Gastrocnemius medialis (tissue), 4 donors: ENCODE measurements at regions of chr1 and their contacts with region 1.

Region 1: DNA sequence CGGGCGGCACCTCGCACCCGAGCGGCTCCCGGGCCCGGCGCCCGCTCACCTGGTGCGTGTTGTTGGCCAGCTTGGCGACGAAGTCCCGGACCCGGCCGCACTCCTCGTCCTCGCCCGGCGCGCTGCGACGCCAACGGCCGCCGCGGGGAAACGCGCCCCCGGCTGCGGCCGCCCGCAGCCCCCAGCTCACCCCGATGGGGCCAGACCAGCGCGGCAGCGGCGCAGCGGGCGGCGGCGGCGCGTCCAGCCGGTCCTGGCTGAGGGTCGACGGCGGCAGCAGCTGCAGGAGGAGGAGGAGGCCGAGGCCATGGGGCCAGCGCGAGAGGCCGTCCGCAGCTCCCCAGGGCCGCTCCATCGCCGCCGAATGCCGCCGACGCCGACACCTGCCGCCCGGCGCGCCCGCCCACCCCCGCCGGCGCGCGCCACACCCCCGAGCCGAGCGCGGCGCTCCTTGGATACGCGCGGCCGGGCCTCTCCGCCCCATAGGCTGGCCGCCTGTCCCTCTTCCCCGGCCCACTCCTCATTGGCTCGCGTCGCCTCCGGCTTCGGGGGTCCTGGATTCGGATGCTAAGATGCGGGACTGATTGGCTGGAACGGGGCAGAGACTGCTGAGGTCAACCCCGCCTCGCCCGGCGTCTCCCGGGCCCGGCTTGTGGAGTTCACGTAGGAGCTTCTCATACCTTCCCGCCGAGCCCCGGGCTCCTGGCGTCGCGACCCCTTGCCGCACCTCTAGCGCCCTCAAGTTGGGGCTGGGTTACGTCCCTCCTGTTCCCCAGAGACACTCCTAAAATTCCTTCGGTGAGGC is at the start of gene SORT1:
- DNase-seq: peak; percentile 70 to 85
- ATAC-seq: peak; percentile 42 to 55
- H3K4me3 ChIP-seq: peak within 1 kb of the TSS; percentile 60 to 75 (median 68)
- H3K27ac ChIP-seq: peak within 1 kb of the TSS; percentile 83 to 97 (median 90)
- H3K4me1 ChIP-seq: peaks cover 48 to 74% of the 10 kb centered on the region in 2 donors
- H3K27me3 ChIP-seq: no peaks in the 10 kb centered on the region
- CTCF ChIP-seq: peak in 3 of 5 experiments; percentile 11 to 34 (median 34)
- POLR2A ChIP-seq: peak; percentile 95 to 96
- total RNA-seq, gene SORT1: 93.7 to 226 (median 190) TPM

Region 2: DNA sequence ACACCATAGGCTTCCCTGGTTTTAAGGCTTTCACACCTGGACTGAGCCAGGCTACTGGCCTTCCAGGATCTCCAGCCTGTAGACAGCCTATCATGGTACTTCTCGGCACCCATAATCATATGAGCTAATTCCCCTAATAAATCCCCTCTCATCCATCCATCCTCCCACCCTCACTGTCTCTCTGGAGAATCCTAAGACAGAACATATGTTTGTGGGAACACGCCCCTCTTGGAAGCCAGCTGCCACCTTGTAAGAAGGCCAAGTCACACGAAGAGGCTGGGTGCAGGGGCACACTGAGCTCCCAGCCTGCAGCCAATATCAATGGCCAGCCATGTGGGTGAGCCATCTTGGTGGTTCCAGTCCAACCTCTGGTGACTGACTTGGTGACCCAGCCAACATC is 441.9 kb before region 1 on chr1:
- in situ Hi-C with region 1: no loop called
- intact Hi-C with region 1: no loop called
- DNase-seq: no peak
- ATAC-seq: no peak
- H3K4me3 ChIP-seq: no peak overlapping the region
- H3K27ac ChIP-seq: no peak overlapping the region
- H3K4me1 ChIP-seq: peaks cover 7 to 10% of the 10 kb centered on the region in 2 donors
- H3K27me3 ChIP-seq: no peaks in the 10 kb centered on the region
- CTCF ChIP-seq: no peak
- POLR2A ChIP-seq: no peak

Region 3: GRCh38 chr1:109213785-109214468 is 183.8 kb before region 1 on chr1 and contains the start of gene SARS1:
- in situ Hi-C with region 1: no loop called
- intact Hi-C with region 1: loop called (anchors 1 kb)
- DNase-seq: peak; percentile 79 to 83
- ATAC-seq: peak; percentile 91 to 92
- H3K4me3 ChIP-seq: peak within 1 kb of the TSS; percentile 80 to 98 (median 87)
- H3K27ac ChIP-seq: peak within 1 kb of the TSS; percentile 89 to 97 (median 94)
- H3K4me1 ChIP-seq: peaks cover 18 to 25% of the 10 kb centered on the region in 2 donors
- H3K27me3 ChIP-seq: no peaks in the 10 kb centered on the region
- CTCF ChIP-seq: no peak
- POLR2A ChIP-seq: peak; percentile 85 to 94
- total RNA-seq, gene SARS1: 97.6 to 116 (median 98.7) TPM

Region 4: GRCh38 chr1:109277434-109278204 is 120.1 kb before region 1 on chr1:
- in situ Hi-C with region 1: loop called in 3 of 4 experiments (anchors 5 to 10 kb)
- intact Hi-C with region 1: loop called (anchors 1 kb)
- DNase-seq: peak; percentile 42 to 75
- ATAC-seq: peak in 1 of 2 donors; percentile 53
- H3K4me3 ChIP-seq: no peak overlapping the region
- H3K27ac ChIP-seq: peak overlapping the region in 3 of 4 donors; percentile 21 to 62 (median 50)
- H3K4me1 ChIP-seq: peaks cover 14 to 33% of the 10 kb centered on the region in 2 donors
- H3K27me3 ChIP-seq: no peaks in the 10 kb centered on the region
- CTCF ChIP-seq: peak; percentile 85 to 93 (median 88)
- POLR2A ChIP-seq: no peak

Region 5: DNA sequence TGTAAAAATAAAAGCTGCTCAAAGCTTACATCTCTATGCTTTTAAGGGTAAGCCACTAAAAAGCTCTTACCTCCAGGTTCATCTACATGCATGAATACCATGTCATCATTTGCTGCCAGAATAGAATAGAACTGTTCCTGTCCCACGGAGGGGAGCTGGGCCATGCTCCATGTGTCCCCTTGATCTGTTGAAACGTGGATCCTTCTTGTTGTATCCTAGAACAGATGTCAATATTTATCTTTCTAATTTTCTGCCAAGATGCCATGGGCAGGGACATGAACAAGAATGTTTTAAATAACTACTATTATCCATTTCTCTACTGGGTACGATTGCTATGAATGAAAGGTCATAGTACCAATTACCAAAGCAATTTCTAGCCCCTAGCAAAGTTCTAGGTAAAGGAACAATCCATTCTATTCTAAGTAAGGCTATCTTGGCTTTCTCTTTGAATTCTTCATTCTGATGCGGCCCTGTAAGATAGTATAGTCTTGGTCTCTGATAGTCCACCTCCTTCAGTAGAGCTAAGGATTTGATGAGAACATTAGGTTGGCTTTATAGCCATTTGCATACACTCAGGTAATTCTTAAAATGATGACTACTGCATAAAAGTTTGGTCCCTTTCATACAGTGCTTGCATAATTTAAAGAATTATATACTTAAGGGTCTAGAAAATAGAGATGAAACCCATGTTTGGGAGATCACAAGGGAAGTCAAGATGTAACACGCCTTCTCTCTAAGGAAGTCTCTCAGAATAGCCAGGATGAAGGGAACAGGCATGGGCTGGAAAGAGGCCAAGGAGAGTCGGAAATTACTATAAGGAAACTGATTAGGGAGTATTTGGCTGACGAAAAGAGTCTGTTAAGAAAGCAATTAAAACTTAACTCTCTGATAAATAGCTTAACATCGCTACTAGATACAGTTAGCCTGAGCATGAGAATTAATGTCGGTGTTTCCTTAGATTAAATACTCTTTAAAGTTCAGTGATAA is 55.5 kb before region 1 on chr1:
- in situ Hi-C with region 1: loop called in 1 of 4 experiments (anchors 10 kb)
- intact Hi-C with region 1: loop called (anchors 2 kb)
- DNase-seq: no peak
- ATAC-seq: no peak
- H3K4me3 ChIP-seq: no peak overlapping the region
- H3K27ac ChIP-seq: peak overlapping the region in 2 of 4 donors; percentile 11 to 85
- H3K4me1 ChIP-seq: peaks cover 7 to 18% of the 10 kb centered on the region in 2 donors
- H3K27me3 ChIP-seq: no peaks in the 10 kb centered on the region
- CTCF ChIP-seq: no peak
- POLR2A ChIP-seq: no peak

Region 6: DNA sequence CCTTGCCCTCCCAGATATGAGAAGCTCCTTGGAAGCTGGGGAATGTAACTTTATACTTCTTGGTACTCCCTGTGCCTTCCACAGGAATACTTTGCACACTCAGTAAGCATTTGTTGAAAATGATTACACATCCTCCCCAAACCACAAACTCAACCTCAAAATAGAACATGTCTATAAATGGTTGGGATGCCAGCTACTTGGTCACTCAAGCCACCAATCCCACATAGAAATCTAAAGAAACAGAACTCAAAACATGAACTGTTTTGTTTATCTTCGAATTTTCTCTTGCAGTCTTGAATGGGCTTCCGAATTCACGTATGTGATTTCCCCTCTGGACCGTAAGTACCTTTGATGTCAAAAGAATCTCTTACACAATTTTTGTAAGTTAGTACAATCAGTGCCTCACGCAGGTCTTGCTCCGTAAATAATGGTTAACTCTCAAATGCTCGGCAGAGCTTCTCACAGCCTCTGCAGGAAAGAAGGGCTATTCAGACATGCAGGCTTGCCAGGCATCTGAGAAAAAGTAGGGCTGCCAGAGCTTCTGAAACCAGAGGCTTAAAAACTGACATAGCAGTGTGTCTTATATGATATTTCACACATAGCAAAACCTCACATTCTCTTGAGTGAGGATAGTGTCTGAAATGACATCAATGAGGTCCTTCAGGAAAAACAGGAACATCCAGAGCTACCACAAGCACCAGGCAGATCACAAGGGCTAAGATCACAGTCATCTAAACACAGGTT is 26.9 kb before region 1 on chr1:
- in situ Hi-C with region 1: no loop called
- intact Hi-C with region 1: loop called (anchors 2 kb)
- DNase-seq: peak; percentile 37 to 54
- ATAC-seq: peak; percentile 85
- H3K4me3 ChIP-seq: peak overlapping the region; percentile 18 to 45 (median 32)
- H3K27ac ChIP-seq: peak overlapping the region; percentile 92 to 97 (median 93)
- H3K4me1 ChIP-seq: peaks cover 52 to 56% of the 10 kb centered on the region in 2 donors
- H3K27me3 ChIP-seq: no peaks in the 10 kb centered on the region
- CTCF ChIP-seq: no peak
- POLR2A ChIP-seq: peak in 1 of 2 donors; percentile 48

Region 7: DNA sequence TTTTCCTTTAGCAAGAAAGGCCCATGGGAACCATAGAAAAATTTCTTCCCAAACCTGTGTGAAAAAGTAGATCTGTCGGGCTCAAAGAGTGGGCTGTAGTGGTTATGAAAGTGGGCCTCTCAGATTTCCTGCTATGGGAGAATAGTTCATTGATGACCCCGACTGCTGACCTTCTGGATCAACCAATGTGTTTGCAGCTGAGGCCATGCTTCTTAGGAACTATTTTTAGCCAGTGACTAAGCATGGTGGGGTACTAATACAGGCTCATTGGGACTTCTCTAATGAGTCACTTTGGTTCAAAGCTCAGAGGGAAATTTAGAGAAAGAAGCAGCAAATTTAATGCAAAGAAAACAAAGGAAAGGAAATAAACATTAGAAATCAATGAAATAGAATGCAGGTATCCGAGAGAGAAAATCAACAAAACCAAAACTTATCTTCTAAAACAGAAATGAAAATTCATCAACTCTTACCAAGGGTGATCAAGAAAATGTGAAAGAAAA is 41.1 kb after region 1 on chr1:
- in situ Hi-C with region 1: no loop called
- intact Hi-C with region 1: no loop called
- DNase-seq: peak in 1 of 2 donors; percentile 33
- ATAC-seq: peak; percentile 89 to 99
- H3K4me3 ChIP-seq: no peak overlapping the region
- H3K27ac ChIP-seq: peak overlapping the region; percentile 9 to 65 (median 53)
- H3K4me1 ChIP-seq: peaks cover 12% of the 10 kb centered on the region in 2 donors
- H3K27me3 ChIP-seq: peaks cover 0 to 5% (median 0%) of the 10 kb centered on the region in 3 donors
- CTCF ChIP-seq: no peak
- POLR2A ChIP-seq: no peak

Region 8: DNA sequence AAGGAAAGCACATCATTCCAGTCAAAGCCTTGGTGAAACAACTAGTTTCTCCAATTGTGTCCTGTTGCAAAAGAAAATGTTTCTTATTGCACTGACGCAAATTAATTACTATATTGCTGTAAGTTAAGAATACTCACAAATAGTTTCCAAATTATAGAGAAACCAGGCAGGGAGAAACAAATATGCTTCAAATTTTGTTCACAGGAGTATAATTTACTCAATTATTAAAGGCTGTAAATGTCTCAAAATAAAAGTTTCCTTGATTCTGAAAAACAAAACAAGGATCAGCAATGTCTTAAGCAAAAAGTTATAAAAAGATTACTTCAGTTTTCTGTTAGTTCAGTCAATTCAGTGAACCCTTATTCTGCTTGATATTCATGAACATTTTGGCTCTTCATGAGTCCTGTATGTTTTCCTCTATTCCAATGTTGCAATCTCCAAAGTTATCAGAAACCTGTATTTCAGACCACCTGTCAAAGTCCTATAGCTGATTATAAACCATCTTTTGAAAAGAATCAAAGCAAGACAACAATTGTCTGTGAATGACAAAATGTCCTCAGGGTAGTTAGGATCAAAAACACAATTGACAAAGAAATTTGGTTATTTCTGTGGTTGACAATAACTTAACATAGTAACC is 56.9 kb after region 1 on chr1:
- in situ Hi-C with region 1: no loop called
- intact Hi-C with region 1: no loop called
- DNase-seq: no peak
- ATAC-seq: no peak
- H3K4me3 ChIP-seq: no peak overlapping the region
- H3K27ac ChIP-seq: no peak overlapping the region
- H3K4me1 ChIP-seq: no peaks in the 10 kb centered on the region
- H3K27me3 ChIP-seq: no peaks in the 10 kb centered on the region
- CTCF ChIP-seq: no peak
- POLR2A ChIP-seq: no peak